ENCODE measurements at regions of chr19 and their contacts with region 1.

Region 1: DNA sequence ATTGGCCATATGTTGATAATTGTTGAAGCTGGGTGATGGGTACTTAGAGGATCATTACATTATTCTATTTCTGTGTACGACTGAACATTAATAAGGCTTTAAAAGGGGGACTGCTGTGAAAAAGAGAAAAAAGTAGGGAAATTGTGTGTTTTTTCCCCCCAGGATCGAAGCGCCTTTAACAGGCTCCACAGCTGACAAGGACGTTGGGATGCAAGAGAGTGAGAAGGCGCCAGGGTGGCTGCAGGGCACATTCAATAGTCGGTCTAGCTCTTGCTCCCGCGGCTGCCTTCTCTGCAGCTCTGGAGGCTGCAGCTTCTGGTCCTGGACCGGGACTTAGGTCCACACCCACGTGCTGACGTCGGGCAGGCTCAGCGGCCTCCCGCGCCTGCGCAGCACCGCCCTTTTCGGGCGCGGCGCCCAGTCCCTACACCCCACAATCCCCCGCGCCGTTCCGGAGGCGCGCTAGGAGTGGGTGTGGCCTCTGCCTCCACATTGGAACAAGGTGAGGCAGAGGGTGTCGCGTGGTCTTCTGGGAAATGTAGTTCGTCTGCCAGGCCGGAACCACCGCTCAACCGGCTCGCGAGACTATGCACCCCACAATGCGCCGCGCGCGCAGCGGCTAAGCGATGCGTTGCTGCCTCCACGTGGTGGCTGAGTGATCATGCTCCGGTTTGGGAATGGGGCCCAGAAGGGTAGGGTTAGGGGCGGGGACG is 4.9 kb upstream of the LRFN3 start:
- DNase-seq: peak; percentile 96 to 100 (median 100)
- ATAC-seq: peak; percentile 98
- H3K4me3 ChIP-seq: peak overlapping the region; percentile 59
- H3K4me3 Mint-ChIP-seq: peak overlapping the region; percentile 61 to 94 (median 83)
- H3K27ac ChIP-seq: peak overlapping the region; percentile 73
- H3K27ac Mint-ChIP-seq: peak overlapping the region; percentile 51 to 98 (median 90)
- H3K4me1 ChIP-seq: peaks cover 32 to 44% of the 10 kb centered on the region in 2 donors
- H3K4me1 Mint-ChIP-seq: peaks cover 33 to 63% (median 49%) of the 10 kb centered on the region in 7 donors
- H3K27me3 ChIP-seq: no peaks in the 10 kb centered on the region
- H3K27me3 Mint-ChIP-seq: no peaks in the 10 kb centered on the region

Region 2: DNA sequence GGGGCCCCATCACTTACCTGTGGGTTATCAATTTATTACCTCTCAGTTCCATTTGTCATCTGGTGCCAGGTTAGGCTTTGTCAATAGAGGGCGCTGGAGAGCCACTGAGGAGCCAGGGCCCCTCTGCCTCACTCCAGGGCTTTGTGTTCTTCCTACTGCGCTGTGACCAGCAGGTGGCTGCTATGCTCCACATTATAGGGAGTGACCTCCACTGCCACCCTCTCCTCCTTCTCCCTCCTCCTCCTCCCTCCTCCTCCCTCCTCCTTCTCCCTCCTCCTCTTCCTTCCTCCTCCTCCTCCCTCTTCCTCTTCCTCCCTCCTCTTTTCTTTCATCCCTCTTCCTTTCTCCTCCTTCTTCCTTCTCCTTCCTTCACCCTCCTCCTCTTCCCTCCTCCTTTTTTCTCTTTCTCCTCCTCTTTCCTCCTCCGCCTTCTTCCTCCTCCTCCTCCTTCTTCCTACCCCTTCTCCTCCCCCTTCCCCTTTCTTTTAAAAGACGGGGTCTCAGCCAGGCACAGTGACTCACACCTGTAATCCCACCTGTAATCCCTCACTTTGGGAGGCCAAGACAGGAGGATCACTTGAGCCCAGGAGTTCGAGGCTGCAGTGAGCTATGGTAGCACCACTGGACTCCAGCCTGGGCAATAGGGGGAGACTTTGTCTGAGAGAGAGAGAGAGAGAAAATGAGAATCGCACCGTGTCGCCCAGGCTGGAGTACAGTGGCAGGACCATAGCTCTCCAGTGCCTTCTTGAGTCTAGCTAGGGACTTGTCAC is 237.3 kb before region 1 on chr19:
- CTCF ChIA-PET with region 1: interaction called, 3 read pairs
- POLR2A ChIA-PET with region 1: interaction called, 3 read pairs
- intact Hi-C with region 1: loop called (anchors 1 kb)
- DNase-seq: peak; percentile 75 to 93 (median 86)
- ATAC-seq: peak; percentile 100
- H3K4me3 ChIP-seq: no peak overlapping the region
- H3K4me3 Mint-ChIP-seq: no peak overlapping the region
- H3K27ac ChIP-seq: no peak overlapping the region
- H3K27ac Mint-ChIP-seq: peak overlapping the region in 4 of 9 donors; percentile 6 to 62 (median 40)
- H3K4me1 ChIP-seq: no peaks in the 10 kb centered on the region
- H3K4me1 Mint-ChIP-seq: peaks cover 0 to 27% (median 0%) of the 10 kb centered on the region in 7 donors
- H3K27me3 ChIP-seq: no peaks in the 10 kb centered on the region
- H3K27me3 Mint-ChIP-seq: no peaks in the 10 kb centered on the region

Region 3: DNA sequence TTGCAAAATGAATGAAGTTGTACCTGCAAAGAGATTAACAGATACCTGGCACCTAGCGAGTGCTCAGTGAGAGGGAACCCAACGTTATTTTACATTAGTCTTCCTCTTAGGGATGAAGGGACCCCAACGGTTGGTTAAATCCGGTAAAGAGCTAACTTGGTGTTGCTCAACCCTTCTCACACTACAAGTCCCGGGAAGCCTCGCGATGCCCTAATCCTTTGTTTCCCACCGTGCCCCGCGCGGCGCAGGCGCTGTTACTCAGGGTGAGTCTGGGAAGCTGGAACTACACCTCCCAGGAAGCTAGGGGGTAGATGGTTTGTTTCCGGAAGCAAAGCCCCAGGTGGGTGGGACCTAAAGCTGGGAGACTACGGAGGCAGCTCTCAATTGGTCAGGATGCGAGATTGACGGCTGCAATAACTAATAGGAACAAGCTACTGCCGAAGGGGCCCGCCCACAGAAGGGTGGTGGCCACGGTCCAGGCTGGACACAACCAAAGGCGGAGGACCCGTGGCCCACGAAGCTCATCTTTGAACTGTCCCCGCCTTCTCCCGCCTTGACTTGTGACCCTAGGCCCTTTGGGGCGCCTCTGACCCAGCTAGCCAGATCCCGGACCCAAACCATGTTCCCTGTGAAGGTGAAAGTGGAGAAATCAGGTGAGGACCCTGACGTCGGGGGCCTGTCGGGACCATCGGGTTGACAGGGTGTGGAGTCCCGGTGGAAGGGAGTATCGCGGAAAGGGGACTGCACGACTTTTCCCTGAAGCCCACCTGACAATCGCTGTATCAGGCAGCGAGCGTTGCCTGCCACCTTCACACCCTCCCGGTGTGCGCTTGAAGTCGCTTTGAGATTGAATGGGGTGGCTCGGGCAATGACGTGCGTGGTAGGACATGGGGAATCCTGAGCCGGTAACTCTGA is 183.0 kb before region 1 on chr19 and contains the start of gene LIN37:
- CTCF ChIA-PET with region 1: no interaction called
- POLR2A ChIA-PET with region 1: interaction called, 4 read pairs
- intact Hi-C with region 1: loop called (anchors 1 kb)
- DNase-seq: peak; percentile 91 to 100 (median 99)
- ATAC-seq: peak; percentile 83
- H3K4me3 ChIP-seq: peak within 1 kb of the TSS; percentile 95
- H3K4me3 Mint-ChIP-seq: peak within 1 kb of the TSS; percentile 90 to 100 (median 98)
- H3K27ac ChIP-seq: peak within 1 kb of the TSS; percentile 85
- H3K27ac Mint-ChIP-seq: peak within 1 kb of the TSS; percentile 89 to 97 (median 95)
- H3K4me1 ChIP-seq: peaks cover 28 to 30% of the 10 kb centered on the region in 2 donors
- H3K4me1 Mint-ChIP-seq: peaks cover 14 to 56% (median 43%) of the 10 kb centered on the region in 7 donors
- H3K27me3 ChIP-seq: no peaks in the 10 kb centered on the region
- H3K27me3 Mint-ChIP-seq: peaks cover 0 to 2% (median 0%) of the 10 kb centered on the region in 5 donors
- total RNA-seq, gene LIN37: 7.9 to 33.1 (median 18.9) TPM

Region 4: DNA sequence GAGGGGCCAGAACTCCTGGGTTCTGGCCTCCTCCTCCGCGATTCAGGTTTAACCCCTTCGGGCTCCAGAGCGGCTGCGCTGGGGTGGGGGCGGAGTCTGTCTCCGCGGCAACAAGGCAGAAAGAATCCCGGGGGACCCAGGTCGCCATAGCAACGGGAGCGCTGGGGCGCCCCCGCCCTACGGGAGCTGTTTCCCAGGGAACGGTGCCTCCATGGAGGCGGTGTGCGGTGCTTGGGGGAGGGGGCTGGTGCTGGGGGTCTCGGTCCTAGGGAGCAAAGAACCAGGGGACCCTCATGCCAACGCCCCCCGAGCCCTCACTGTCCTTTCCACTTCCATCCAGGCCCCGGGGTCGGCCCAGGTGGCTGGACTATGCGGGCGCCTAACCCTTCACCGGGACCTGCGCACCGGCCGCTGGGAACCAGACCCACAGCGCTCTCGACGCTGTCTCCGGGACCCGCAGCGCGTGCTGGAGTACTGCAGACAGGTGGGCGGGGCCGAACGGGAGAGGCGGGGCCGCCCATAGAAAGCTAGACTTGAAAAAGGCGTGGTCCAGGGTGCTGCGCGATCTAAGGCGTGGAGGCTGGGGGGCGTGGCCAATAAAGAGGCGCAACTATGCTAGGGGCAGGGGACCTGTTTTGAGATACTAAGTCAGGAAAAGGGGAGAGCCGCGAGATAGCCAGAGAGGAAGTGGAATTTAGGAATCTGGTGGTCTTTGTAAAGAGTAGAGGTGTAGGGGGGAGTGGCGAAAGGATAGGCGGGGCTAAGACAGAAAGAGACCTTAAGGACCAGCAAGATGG is 61.8 kb before region 1 on chr19:
- CTCF ChIA-PET with region 1: no interaction called
- POLR2A ChIA-PET with region 1: no interaction called
- intact Hi-C with region 1: loop called in 1 of 2 experiments (anchors 1 kb)
- DNase-seq: peak; percentile 55 to 88 (median 78)
- ATAC-seq: peak; percentile 95
- H3K4me3 ChIP-seq: no peak overlapping the region
- H3K4me3 Mint-ChIP-seq: peak overlapping the region; percentile 75 to 92 (median 82)
- H3K27ac ChIP-seq: no peak overlapping the region
- H3K27ac Mint-ChIP-seq: peak overlapping the region in 5 of 9 donors; percentile 12 to 68 (median 53)
- H3K4me1 ChIP-seq: peaks cover 16 to 18% of the 10 kb centered on the region in 2 donors
- H3K4me1 Mint-ChIP-seq: peaks cover 13 to 22% (median 17%) of the 10 kb centered on the region in 7 donors
- H3K27me3 ChIP-seq: peaks cover 5 to 7% of the 10 kb centered on the region in 2 donors
- H3K27me3 Mint-ChIP-seq: peaks cover 22 to 57% (median 42%) of the 10 kb centered on the region in 5 donors

Region 5: DNA sequence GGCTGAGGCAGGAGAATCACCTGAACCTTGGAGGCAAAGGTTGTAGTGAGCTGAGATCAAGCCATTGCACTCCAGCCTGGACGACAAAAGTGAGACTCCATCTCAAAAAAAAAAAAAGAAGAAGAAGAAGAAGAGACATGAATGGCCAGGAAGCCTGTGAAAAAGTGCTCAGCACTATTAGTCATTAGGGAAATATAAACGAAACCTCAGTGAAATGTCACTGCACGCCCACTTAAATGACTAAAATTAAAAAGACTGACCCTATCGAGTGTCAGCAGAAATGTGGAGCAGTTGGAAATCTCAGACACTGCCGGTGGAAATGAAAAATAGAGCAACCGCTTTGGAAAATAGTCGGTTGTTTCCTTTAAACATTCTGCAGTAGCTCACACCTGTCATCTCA is 17.7 kb before region 1 on chr19:
- CTCF ChIA-PET with region 1: interaction called, 3 read pairs
- POLR2A ChIA-PET with region 1: interaction called, 11 read pairs
- intact Hi-C with region 1: no loop called
- DNase-seq: no peak
- ATAC-seq: no peak
- H3K4me3 ChIP-seq: no peak overlapping the region
- H3K4me3 Mint-ChIP-seq: no peak overlapping the region
- H3K27ac ChIP-seq: no peak overlapping the region
- H3K27ac Mint-ChIP-seq: no peak overlapping the region
- H3K4me1 ChIP-seq: peaks cover 0 to 11% of the 10 kb centered on the region in 2 donors
- H3K4me1 Mint-ChIP-seq: peaks cover 11 to 24% (median 21%) of the 10 kb centered on the region in 7 donors
- H3K27me3 ChIP-seq: no peaks in the 10 kb centered on the region
- H3K27me3 Mint-ChIP-seq: no peaks in the 10 kb centered on the region

Region 6: DNA sequence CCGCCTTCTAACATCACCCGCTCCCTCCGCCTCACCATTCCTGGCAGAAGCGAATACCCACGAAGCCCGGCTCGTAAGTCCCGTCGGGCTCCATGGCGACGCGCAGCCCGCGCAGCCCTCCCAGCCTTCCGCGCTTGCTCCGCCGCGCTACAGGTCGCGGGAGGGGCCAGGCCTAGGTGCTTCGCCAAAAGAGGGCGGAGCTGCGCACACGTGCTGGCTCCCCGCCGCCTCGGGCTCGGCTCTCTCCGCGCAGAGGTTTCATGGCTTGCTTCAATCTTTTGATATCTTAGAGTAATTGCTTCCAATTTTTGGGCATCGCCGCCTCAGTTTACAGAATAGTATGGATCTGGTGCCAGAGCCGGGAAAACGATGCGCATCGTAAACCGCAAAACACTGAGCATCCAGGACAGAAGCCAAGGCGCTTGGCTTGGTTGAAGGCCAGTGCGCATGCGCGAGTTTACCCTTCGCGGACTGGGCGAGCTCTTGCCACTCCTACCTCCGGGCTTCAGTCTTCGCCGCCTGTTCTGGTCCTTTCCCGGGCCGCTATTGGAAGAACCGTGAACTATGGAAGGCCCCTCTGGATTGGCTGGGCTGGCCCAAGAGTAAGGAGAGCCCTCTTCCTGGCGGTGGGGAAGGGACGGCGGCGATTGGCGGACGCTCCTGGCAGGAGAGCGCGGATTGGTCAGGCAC is 183.6 kb after region 1 on chr19 and contains the start of gene POLR2I:
- CTCF ChIA-PET with region 1: no interaction called
- POLR2A ChIA-PET with region 1: no interaction called
- intact Hi-C with region 1: loop called in 1 of 2 experiments (anchors 1 kb)
- DNase-seq: peak; percentile 95 to 100 (median 99)
- ATAC-seq: peak; percentile 92
- H3K4me3 ChIP-seq: peak within 1 kb of the TSS; percentile 97
- H3K4me3 Mint-ChIP-seq: peak within 1 kb of the TSS; percentile 89 to 98 (median 96)
- H3K27ac ChIP-seq: peak within 1 kb of the TSS; percentile 90
- H3K27ac Mint-ChIP-seq: peak within 1 kb of the TSS; percentile 97 to 99 (median 98)
- H3K4me1 ChIP-seq: peaks cover 14 to 15% of the 10 kb centered on the region in 2 donors
- H3K4me1 Mint-ChIP-seq: peaks cover 27 to 54% (median 42%) of the 10 kb centered on the region in 7 donors
- H3K27me3 ChIP-seq: no peaks in the 10 kb centered on the region
- H3K27me3 Mint-ChIP-seq: peaks cover 0 to 5% (median 0%) of the 10 kb centered on the region in 5 donors
- total RNA-seq, gene POLR2I: 20.9 to 56.7 (median 44.7) TPM